ENCODE measurements at regions of chr2 and their contacts with region 1.

Region 1: GRCh38 chr2:16630463-16630862 is 35.2 kb downstream of the CYRIA start:
- DNase-seq: peak; percentile 72
- ATAC-seq: peak; percentile 57
- H3K4me3 ChIP-seq: no peak overlapping the region
- H3K4me3 Mint-ChIP-seq: peak overlapping the region; percentile 47
- H3K27ac ChIP-seq: peak overlapping the region; percentile 41 to 59
- H3K27ac Mint-ChIP-seq: peak overlapping the region; percentile 93
- H3K4me1 ChIP-seq: peaks cover 71 to 95% of the 10 kb centered on the region in 2 donors
- H3K4me1 Mint-ChIP-seq: peaks cover 98% of the 10 kb centered on the region
- H3K27me3 ChIP-seq: no peaks in the 10 kb centered on the region
- H3K27me3 Mint-ChIP-seq: no peaks in the 10 kb centered on the region
- CTCF ChIP-seq: peak; percentile 65

Region 2: DNA sequence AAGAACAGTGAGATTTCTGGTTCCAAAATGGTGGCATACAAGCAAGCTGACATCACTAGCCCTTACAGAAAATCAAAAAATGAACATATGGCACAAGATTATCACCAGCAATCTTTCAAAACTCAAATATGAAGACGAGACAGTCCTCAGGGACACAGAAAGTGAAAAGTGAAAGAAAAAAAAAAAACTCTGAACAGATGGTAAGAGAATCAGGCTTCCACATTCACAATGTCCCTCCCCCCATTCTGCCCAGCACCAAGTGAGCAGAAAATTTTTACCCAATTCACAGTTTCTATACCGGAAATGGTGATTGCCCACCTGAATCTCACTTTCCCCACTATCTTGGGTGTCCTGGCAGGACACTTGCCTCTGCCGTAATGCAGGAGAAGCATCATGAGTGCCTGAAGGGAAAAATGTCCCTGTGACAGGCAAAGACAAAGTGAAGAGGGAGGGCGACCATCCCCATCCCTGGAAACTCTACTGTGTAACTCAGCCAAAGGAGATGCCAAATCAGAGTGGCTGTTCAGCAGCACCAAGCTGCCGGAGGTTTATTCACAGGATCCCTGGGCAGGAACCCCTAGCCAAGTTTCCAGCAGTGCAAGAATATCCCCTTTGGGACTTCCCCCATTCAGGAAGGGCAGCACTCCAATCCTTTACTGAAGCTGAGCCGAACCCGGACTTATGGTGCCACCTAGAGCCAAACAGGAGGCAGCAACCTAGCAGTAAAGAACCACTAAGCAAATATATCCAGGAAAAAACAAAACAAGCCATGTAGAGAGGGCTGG is 1685.7 kb before region 1 on chr2:
- CTCF ChIA-PET with region 1: no interaction called
- POLR2A ChIA-PET with region 1: no interaction called
- intact Hi-C with region 1: no loop called
- DNase-seq: no peak
- ATAC-seq: no peak
- H3K4me3 ChIP-seq: no peak overlapping the region
- H3K4me3 Mint-ChIP-seq: no peak overlapping the region
- H3K27ac ChIP-seq: no peak overlapping the region
- H3K27ac Mint-ChIP-seq: no peak overlapping the region
- H3K4me1 ChIP-seq: no peaks in the 10 kb centered on the region
- H3K4me1 Mint-ChIP-seq: no peaks in the 10 kb centered on the region
- H3K27me3 ChIP-seq: no peaks in the 10 kb centered on the region
- H3K27me3 Mint-ChIP-seq: peaks cover 14% of the 10 kb centered on the region
- CTCF ChIP-seq: no peak

Region 3: DNA sequence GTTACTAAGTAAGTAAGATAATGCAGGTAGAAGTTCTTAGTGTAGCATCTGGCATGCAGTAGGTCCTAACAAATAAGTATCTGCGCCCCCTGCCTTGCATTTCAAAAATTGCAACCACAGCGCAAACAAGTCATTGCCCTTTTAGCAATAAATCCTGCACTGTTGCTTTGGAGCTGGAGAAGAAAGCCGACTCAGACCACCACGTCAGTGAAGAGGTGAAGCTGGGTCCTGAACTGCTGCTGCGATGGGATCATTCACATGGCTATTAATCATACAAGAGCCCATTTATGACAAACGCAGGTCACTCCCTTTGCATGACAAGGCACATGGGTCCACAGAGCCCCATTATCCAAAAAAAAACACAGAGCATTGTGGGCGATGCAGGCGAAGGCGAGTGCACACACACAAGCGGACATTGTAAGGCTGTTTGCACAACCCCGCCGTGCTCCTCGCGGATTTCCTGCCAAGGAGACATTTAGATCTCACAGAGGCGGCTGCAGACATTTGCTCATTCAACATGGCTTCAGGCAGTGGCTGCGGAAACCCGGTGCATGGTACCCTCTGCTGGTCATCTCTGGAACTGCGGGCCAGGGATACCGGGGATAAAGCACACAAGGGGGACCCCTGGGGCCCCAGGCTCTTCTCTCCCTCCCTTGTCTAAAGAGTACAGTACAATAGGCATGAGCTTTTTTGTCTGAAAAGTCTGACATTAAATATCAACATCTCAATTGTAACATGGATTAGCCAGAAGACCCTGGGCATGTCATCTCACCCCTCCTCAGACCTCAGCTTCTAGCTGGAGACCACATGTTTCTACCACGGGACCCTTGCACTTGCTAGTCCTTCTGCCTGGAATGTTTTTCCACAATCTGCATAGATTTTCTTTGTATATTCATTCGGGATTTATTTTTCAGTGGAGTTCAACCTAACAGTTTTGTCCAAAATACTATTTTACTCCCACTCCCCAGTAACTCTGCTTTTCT is 21.5 kb before region 1 on chr2:
- CTCF ChIA-PET with region 1: interaction called, 84 read pairs
- POLR2A ChIA-PET with region 1: no interaction called
- intact Hi-C with region 1: no loop called
- DNase-seq: peak; percentile 86
- ATAC-seq: peak; percentile 95
- H3K4me3 ChIP-seq: peak overlapping the region; percentile 38 to 66 (median 60)
- H3K4me3 Mint-ChIP-seq: peak overlapping the region; percentile 87
- H3K27ac ChIP-seq: no peak overlapping the region
- H3K27ac Mint-ChIP-seq: peak overlapping the region; percentile 53
- H3K4me1 ChIP-seq: peaks cover 4 to 13% of the 10 kb centered on the region in 2 donors
- H3K4me1 Mint-ChIP-seq: peaks cover 27% of the 10 kb centered on the region
- H3K27me3 ChIP-seq: no peaks in the 10 kb centered on the region
- H3K27me3 Mint-ChIP-seq: no peaks in the 10 kb centered on the region
- CTCF ChIP-seq: peak; percentile 91

Region 4: DNA sequence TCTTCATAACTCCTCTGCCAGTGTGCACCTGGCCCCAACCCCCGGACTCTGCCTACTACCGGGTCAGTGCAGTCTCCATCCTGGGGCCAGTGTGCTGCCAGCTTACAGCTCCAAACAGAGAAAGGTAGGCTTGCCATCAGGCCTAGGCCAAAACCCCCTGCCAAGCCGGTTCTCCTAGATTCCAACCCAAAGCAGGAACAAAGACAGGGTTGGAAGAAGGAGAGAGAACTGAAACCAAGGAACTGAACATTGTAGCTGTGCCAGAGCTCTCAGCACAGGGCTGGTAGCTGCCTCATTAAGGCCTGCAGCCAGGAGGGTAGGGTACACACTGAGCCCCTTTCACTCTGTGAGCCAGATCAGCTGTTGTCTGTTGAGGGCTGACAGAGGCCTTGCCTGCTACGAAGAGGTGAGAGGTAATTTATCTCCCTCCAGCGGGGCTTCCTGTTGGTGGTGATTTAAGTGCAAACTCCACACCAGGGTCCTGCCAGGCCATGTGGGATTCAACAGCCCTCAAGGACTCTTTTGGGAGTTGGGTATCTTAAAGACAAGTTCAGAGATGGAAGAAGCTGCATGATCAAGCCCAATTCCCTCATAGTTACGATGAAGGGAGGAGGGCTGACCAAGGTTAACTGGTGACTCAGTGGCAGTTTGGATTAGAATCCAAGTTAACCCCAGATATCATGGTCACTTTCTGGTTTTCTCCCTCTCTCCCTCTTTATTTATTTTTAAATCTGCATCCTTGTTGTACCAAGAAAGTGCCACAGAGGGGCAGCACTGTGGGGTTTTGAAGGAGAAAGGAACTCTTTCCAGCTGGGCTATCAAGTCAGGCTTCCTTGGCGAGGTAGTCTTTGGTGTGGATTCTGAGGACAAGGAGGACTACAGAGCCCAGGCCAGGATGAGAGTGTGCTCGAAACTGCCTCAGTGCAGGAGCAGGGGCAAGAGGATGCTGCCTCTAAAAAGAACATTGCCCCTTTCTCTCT is 12.9 kb before region 1 on chr2:
- CTCF ChIA-PET with region 1: interaction called, 84 read pairs
- POLR2A ChIA-PET with region 1: no interaction called
- intact Hi-C with region 1: no loop called
- DNase-seq: no peak
- ATAC-seq: no peak
- H3K4me3 ChIP-seq: no peak overlapping the region
- H3K4me3 Mint-ChIP-seq: no peak overlapping the region
- H3K27ac ChIP-seq: peak overlapping the region in 1 of 2 donors; percentile 18
- H3K27ac Mint-ChIP-seq: peak overlapping the region; percentile 46
- H3K4me1 ChIP-seq: peaks cover 25 to 43% of the 10 kb centered on the region in 2 donors
- H3K4me1 Mint-ChIP-seq: peaks cover 61% of the 10 kb centered on the region
- H3K27me3 ChIP-seq: no peaks in the 10 kb centered on the region
- H3K27me3 Mint-ChIP-seq: no peaks in the 10 kb centered on the region
- CTCF ChIP-seq: no peak

Region 5: GRCh38 chr2:16650287-16651249 is 20.1 kb after region 1 on chr2:
- CTCF ChIA-PET with region 1: interaction called, 50 read pairs
- POLR2A ChIA-PET with region 1: no interaction called
- intact Hi-C with region 1: no loop called
- DNase-seq: peak; percentile 61
- ATAC-seq: peak; percentile 58
- H3K4me3 ChIP-seq: peak overlapping the region in 3 of 5 experiments; percentile 5 to 49 (median 20)
- H3K4me3 Mint-ChIP-seq: peak overlapping the region; percentile 82
- H3K27ac ChIP-seq: peak overlapping the region; percentile 15 to 68
- H3K27ac Mint-ChIP-seq: peak overlapping the region; percentile 89
- H3K4me1 ChIP-seq: peaks cover 80% of the 10 kb centered on the region in 2 donors
- H3K4me1 Mint-ChIP-seq: peaks cover 86% of the 10 kb centered on the region
- H3K27me3 ChIP-seq: no peaks in the 10 kb centered on the region
- H3K27me3 Mint-ChIP-seq: no peaks in the 10 kb centered on the region
- CTCF ChIP-seq: no peak

Region 6: DNA sequence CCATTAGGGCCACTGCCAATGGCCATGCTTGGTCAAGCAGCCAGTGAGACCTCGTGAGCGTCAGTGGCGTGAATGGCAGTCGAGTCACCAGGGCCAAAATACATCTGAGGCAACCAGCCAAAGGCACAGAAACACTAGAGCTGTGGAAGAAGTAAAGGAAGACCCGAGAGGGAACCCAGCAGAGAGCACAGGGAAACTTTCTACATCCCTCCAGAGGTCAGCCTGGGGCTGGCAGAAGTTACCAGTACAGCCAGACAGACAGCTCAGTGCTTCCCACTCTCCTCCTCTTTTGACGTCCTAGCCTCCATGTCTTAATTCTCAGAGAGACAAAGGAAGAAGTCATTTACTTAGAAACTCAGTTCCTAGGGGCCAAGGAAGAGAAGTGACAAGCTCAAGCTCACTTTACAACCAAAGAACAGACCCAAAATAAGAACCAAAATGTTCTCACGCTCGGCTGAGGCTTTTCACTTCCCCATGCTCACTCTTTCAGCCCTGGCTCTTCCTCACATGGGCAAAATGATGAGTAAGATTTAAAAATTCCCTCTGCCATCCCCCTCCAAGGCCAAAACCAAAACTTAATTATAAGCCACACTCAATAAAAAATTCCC is 26.4 kb after region 1 on chr2:
- CTCF ChIA-PET with region 1: interaction called, 50 read pairs
- POLR2A ChIA-PET with region 1: interaction called, 3 read pairs
- intact Hi-C with region 1: loop called (anchors 2 kb)
- DNase-seq: peak; percentile 82
- ATAC-seq: peak; percentile 65
- H3K4me3 ChIP-seq: peak overlapping the region in 3 of 5 experiments; percentile 16 to 43 (median 33)
- H3K4me3 Mint-ChIP-seq: peak overlapping the region; percentile 84
- H3K27ac ChIP-seq: peak overlapping the region; percentile 66 to 82
- H3K27ac Mint-ChIP-seq: peak overlapping the region; percentile 86
- H3K4me1 ChIP-seq: peaks cover 96 to 99% of the 10 kb centered on the region in 2 donors
- H3K4me1 Mint-ChIP-seq: peaks cover 98% of the 10 kb centered on the region
- H3K27me3 ChIP-seq: no peaks in the 10 kb centered on the region
- H3K27me3 Mint-ChIP-seq: no peaks in the 10 kb centered on the region
- CTCF ChIP-seq: no peak

Region 7: DNA sequence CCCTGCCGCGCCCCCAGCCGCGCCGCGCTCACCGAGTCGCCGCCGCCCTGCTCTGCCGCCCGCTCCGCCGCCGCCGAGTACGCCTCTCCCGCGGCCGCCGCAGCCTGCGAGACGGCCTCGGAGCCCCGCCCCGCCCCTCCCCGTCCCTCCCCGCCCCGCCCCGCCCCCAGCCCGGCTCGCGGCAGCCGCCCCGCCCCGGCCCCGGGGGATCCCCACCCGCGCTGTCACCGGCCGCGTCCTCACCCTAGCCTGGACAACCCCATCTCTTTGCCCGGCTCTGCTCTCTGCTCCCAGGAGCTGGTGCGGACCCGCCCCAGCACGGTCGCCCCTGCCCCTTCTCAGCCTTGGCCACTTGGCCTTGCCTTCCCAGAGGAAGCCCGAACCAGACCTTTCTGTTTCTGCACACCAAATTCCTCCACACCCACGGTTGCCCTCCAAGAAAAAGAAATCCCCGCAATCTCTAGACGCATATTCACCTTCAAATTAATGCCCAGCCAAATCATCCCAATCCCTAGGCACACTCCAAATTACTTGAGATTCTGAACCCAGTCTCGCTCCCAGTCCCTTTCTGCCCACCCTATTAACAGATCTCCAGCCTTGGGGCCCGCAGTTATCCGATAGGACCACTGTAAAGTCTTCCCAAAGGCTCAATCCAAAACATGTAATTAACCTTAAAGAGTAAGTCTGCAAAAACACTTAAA is 35.4 kb after region 1 on chr2 and contains the start of gene CYRIA:
- CTCF ChIA-PET with region 1: interaction called, 10 read pairs
- POLR2A ChIA-PET with region 1: interaction called, 4 read pairs
- intact Hi-C with region 1: loop called (anchors 1 kb)
- DNase-seq: peak; percentile 82
- ATAC-seq: peak; percentile 71
- H3K4me3 ChIP-seq: peak within 1 kb of the TSS; percentile 55 to 97 (median 91)
- H3K4me3 Mint-ChIP-seq: peak within 1 kb of the TSS; percentile 92
- H3K27ac ChIP-seq: peak within 1 kb of the TSS; percentile 72 to 87
- H3K27ac Mint-ChIP-seq: peak within 1 kb of the TSS; percentile 95
- H3K4me1 ChIP-seq: peaks cover 43 to 53% of the 10 kb centered on the region in 2 donors
- H3K4me1 Mint-ChIP-seq: peaks cover 55% of the 10 kb centered on the region
- H3K27me3 ChIP-seq: no peaks in the 10 kb centered on the region
- H3K27me3 Mint-ChIP-seq: no peaks in the 10 kb centered on the region
- CTCF ChIP-seq: no peak
- total RNA-seq, gene CYRIA: 58.8 and 59.0 TPM in 2 replicates

Measured in B cell (primary cell).